Activated CD4-positive, alpha-beta memory T cell treated with anti-CD3 and anti-CD28 coated beads for 36 hours (primary cell): ENCODE measurements at regions of chr11 and their contacts with region 1.

Region 1: DNA sequence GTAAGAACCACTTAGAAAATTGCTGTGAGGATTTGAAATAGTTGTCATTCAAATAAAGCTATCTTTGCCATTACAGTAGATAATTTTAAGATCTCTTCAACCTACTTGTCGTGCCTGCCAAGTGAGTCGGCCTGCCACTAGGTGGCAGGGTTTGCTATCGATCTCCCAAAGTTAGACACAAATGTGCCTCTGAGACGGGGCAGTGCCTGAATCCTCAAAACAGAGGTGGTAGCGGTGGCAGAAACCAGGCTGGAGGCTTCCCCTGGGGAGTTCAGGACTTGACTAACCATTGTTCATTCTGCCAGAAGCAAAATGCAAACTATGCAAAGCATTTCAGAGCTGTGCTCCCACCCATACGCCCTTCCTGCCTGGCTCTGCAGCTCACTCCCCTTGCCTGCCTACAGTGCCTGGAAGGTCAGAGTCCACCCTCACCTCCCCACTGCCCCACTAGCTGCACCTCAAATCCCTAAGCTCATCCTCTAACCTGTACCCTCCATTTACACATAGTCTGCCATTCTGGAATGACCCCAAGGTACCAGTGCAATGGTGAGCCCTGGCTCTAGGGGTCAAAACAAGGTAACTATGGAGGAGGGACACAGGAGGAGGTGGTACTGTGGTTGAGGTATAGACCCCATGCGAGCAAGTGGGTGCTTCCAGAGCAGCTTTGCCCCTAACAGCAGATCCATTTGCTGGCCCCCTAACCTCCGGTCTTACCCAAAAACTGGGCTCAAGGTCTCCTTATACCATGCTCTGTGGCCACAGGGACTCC is 82.1 kb downstream of the C11orf58 start:
- DNase-seq: peak; percentile 87
- H3K4me3 Mint-ChIP-seq: no peak overlapping the region
- H3K27ac Mint-ChIP-seq: no peak overlapping the region
- H3K4me1 Mint-ChIP-seq: peaks cover 2% of the 10 kb centered on the region
- H3K27me3 Mint-ChIP-seq: no peaks in the 10 kb centered on the region

Region 2: GRCh38 chr11:16713594-16713993 is 106.9 kb before region 1 on chr11:
- CTCF ChIA-PET with region 1: no interaction called
- POLR2A ChIA-PET with region 1: no interaction called
- intact Hi-C with region 1: no loop called
- DNase-seq: no peak
- H3K4me3 Mint-ChIP-seq: no peak overlapping the region
- H3K27ac Mint-ChIP-seq: no peak overlapping the region
- H3K4me1 Mint-ChIP-seq: no peaks in the 10 kb centered on the region
- H3K27me3 Mint-ChIP-seq: peaks cover 3% of the 10 kb centered on the region

Region 3: DNA sequence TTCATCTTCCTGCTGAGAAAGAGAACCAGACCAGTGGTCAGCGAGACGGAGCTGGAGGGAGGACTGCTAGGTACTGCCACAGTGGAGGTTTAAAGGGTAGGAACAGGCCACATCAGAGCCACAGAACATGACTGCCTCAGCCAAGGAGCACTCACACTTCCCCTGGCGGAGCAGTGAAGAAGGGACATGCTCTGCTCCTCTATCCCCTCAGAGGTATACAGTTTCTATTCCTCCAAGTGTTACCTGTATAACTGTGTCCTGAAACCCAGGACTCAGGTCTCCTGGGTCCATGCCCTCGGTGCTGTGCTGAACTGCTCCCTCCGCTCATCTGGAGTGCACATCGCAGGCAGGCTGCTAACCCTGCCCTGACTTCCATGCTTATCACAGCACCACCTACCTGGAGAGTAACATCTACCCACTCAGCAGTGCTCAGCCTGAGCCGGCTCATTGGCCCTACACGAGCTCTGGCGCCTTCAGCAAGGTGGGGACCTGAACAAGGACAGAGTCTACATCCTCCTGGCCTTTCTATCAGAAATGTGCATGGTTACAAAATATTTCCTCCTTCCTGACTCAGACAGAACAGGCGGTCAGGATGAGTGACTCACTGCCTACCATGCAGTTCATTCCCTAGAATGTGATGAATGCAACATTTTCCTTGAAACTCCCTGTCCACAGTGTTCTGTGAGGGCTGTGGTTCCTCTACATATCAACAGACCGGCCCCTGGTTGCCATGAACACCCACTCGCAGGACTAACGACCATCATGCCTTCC is 29.1 kb before region 1 on chr11:
- CTCF ChIA-PET with region 1: interaction called, 25 read pairs
- POLR2A ChIA-PET with region 1: no interaction called
- intact Hi-C with region 1: loop called (anchors 5 kb)
- DNase-seq: peak; percentile 23
- H3K4me3 Mint-ChIP-seq: no peak overlapping the region
- H3K27ac Mint-ChIP-seq: peak overlapping the region; percentile 29
- H3K4me1 Mint-ChIP-seq: peaks cover 12% of the 10 kb centered on the region
- H3K27me3 Mint-ChIP-seq: no peaks in the 10 kb centered on the region

Region 4: DNA sequence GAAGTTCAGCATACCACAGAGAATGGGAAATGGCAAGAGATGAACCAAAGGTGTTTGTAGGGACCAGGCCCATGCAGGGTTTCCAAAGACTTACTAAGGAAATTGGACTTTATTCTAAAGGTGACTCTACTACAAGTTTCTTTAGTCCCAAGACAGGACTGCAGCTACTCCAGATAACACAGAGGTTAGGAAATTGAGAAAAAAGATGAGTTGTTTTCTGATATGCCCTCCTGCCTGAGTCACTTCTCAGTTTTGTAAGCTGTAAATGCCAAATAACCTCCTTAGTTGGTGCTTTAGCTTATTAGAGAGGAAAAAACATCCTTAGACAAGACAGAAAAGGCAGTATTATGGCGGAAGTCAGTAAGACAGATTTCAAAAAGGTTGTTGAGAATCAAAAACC is 13.9 kb after region 1 on chr11:
- CTCF ChIA-PET with region 1: interaction called, 12 read pairs
- POLR2A ChIA-PET with region 1: no interaction called
- intact Hi-C with region 1: no loop called
- DNase-seq: no peak
- H3K4me3 Mint-ChIP-seq: no peak overlapping the region
- H3K27ac Mint-ChIP-seq: no peak overlapping the region
- H3K4me1 Mint-ChIP-seq: peaks cover 5% of the 10 kb centered on the region
- H3K27me3 Mint-ChIP-seq: no peaks in the 10 kb centered on the region

Region 5: DNA sequence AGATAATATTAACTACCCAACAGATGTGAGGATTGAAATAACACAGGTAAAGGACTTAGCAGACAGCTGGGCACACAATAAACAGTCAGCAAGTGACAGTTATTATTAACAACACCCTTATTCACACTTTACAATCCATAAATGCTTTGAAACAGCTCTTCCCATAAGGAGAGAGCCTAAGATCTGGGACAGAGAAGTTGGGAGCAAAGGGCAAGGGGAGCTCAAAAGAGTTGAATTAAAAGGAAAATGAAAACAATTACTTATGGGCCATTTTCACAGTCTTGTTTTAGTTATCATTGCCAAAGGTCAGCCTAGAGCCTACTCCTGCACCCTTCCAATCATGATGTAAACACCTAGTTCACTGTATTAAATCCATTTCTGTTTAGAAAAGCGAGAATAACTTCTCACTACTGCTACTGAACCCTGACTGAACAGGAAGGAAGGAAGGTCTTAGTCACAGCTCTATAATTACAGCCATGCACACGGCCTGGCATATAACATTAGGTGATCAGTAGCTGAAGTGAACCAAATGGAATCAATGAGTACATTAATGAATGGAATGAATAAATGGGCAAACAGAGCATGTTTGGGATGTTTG is 82.4 kb after region 1 on chr11:
- CTCF ChIA-PET with region 1: interaction called, 9 read pairs
- POLR2A ChIA-PET with region 1: no interaction called
- intact Hi-C with region 1: loop called (anchors 2 kb)
- DNase-seq: peak; percentile 29
- H3K4me3 Mint-ChIP-seq: peak overlapping the region; percentile 31
- H3K27ac Mint-ChIP-seq: peak overlapping the region; percentile 95
- H3K4me1 Mint-ChIP-seq: peaks cover 48% of the 10 kb centered on the region
- H3K27me3 Mint-ChIP-seq: no peaks in the 10 kb centered on the region

Region 6: DNA sequence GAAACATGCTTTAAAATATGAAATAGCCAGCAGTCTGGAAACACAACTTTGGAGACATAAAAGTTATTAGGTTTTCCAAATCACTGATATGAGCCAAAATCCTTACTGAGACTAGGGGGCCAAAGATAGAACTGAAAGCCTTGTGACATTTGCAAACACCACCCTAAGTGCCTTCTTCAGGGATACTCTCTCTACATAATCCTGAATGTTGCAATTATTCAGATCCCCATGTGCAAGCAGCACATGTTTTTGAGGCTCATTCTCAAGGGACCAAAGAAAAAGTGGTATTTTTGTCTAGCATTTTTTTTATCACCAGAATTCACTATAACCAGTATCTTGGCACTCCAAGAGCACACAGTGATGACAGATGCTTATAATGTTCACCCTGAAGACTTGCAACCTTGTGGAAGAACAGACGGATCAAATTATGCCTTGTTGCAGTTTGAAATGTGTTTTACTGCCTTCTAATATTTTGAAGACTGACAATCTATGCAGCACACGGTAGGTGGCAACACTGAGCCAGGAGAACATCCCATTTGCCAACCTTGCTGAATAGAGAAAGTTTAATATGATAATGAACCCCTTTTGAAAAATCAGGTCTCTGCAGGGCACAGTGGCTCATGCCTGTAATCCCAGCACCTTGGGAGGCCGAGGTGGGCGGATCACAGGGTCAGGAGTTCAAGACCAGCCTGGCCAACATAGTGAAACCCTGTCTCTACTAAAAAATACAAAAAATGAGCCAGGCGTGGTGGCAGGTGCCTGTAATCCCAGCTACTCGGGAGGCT is 115.2 kb after region 1 on chr11:
- CTCF ChIA-PET with region 1: interaction called, 32 read pairs
- POLR2A ChIA-PET with region 1: no interaction called
- intact Hi-C with region 1: loop called (anchors 1 kb)
- DNase-seq: peak; percentile 42
- H3K4me3 Mint-ChIP-seq: no peak overlapping the region
- H3K27ac Mint-ChIP-seq: no peak overlapping the region
- H3K4me1 Mint-ChIP-seq: peaks cover 3% of the 10 kb centered on the region
- H3K27me3 Mint-ChIP-seq: peaks cover 2% of the 10 kb centered on the region

Region 7: DNA sequence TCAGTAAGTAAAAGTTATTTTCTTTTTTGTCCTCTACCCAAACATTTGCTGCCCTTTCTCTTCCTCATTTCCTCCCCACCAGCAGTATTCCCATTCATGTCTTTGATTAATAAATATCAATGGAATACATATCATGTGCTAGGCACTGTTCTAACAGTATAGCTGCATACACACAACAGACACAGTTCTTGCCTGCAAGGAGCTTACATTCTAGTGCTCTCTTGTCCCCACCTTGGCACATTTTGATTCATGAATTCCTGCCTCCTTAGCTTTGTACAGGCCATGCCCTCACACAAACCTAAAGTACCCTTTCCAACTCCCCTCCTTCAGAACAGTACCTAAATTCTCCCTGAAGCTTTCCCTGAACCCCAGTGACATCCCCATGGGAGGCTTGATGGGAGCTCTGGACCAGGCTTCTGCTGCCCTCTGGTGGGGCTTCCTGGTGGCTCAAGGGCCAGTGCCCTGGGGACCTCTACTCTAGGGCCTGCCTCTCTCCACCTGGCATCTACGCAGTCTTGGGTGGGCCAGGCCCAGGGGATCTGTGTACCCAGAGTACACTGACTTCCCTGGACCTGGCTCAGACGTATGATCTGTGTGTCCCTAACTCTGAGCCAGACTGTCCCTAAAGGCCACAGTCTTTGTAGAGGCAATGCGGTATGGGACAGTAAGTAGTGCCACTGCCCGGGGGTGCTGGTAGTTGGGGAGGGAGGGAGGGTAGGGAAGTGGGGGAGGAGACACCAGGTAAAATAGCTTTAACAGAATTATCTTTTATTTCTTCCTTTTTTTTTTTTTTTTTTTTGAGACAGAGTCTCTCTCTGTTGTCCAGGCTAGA is 242.9 kb after region 1 on chr11:
- CTCF ChIA-PET with region 1: interaction called, 92 read pairs
- POLR2A ChIA-PET with region 1: no interaction called
- intact Hi-C with region 1: loop called (anchors 1 kb)
- DNase-seq: peak; percentile 73
- H3K4me3 Mint-ChIP-seq: no peak overlapping the region
- H3K27ac Mint-ChIP-seq: no peak overlapping the region
- H3K4me1 Mint-ChIP-seq: no peaks in the 10 kb centered on the region
- H3K27me3 Mint-ChIP-seq: no peaks in the 10 kb centered on the region